Activated B cell treated with CpG ODN at 0.5 μM for 24 hours (primary cell): ENCODE measurements at regions of chr2 and their contacts with region 1.

Region 1: DNA sequence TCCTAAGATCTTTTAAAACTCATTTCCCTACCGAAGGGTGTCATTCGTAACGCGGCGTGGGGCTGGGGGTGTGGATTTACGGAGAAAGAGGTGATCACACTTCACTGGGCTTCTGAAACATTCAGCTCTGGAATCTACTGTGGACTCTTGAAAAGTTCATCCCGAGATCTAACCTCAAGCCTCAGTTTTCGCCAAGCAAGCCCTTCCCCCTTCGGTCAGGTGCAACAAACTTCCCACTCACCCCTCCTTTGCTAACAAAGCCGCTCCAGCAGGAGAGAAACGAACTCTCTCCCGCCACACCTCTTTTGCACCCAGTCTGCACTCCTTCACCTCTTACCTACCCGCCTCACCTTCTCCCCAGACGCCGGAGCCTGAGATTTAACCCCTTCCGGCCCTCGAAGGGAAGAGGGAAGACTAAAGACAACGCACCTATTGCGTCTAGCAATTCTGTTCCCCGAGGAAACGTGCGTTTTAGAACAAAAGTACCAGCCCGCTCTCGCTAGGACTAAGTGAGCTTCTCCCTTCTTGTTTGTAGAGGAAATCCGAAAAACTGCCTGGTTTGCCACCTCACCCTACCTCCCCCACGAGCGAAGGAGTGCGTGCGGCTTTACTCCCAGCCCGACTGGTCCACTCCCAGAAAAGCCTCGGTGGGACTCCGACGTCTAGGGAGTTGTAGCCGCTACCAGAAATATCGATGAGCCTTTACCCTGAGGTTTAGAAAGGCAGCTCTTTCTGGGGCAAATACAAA is 538 bp upstream of the PEX13 start:
- DNase-seq: peak; percentile 62
- ATAC-seq: peak; percentile 70
- H3K4me3 Mint-ChIP-seq: peak overlapping the region; percentile 99
- H3K27ac Mint-ChIP-seq: peak overlapping the region; percentile 98
- H3K4me1 Mint-ChIP-seq: peaks cover 33% of the 10 kb centered on the region
- H3K27me3 Mint-ChIP-seq: no peaks in the 10 kb centered on the region
- CTCF ChIP-seq: no peak

Region 2: DNA sequence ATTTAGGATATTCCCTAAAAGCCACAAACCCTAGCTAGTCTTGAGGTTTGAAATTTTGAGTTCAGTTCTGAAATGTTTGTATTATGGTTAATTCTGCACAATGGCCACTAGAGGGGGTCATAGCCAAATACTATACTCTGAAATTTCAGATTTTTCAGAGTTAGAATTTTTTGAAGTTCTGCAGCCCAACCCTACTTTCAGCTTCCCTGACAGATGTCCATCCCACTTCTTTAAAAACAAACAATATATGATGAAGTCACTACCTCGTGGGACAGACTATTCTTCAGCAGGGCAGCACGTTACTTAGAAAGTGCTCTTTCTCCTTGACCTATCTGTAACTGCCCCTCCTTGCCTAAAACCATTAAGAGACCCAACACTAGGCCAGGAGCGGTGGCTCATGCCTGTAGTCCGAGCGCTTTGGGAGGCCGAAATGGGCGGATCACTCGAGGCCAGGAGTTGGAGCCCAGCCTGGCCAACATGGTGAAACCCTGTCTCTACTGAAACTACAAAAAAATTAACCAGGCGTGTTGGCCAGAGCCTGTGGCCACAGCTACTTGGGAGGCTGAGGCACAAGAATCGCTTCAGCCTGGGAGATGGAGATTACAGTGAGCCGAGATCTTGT is 309.1 kb before region 1 on chr2:
- CTCF ChIA-PET with region 1: no interaction called
- POLR2A ChIA-PET with region 1: no interaction called
- intact Hi-C with region 1: no loop called
- DNase-seq: no peak
- ATAC-seq: peak; percentile 28
- H3K4me3 Mint-ChIP-seq: no peak overlapping the region
- H3K27ac Mint-ChIP-seq: no peak overlapping the region
- H3K4me1 Mint-ChIP-seq: no peaks in the 10 kb centered on the region
- H3K27me3 Mint-ChIP-seq: peaks cover 5% of the 10 kb centered on the region
- CTCF ChIP-seq: no peak

Region 3: GRCh38 chr2:61065715-61066709 is 49.0 kb after region 1 on chr2 and contains the start of gene SANBR:
- CTCF ChIA-PET with region 1: no interaction called
- POLR2A ChIA-PET with region 1: interaction called, 3 read pairs
- intact Hi-C with region 1: loop called (anchors 1 kb)
- DNase-seq: peak; percentile 85
- ATAC-seq: peak; percentile 98
- H3K4me3 Mint-ChIP-seq: peak within 1 kb of the TSS; percentile 96
- H3K27ac Mint-ChIP-seq: peak within 1 kb of the TSS; percentile 82
- H3K4me1 Mint-ChIP-seq: peaks cover 11% of the 10 kb centered on the region
- H3K27me3 Mint-ChIP-seq: no peaks in the 10 kb centered on the region
- CTCF ChIP-seq: no peak
- total RNA-seq, gene SANBR: 2.0 and 2.2 TPM in 2 replicates

Region 4: DNA sequence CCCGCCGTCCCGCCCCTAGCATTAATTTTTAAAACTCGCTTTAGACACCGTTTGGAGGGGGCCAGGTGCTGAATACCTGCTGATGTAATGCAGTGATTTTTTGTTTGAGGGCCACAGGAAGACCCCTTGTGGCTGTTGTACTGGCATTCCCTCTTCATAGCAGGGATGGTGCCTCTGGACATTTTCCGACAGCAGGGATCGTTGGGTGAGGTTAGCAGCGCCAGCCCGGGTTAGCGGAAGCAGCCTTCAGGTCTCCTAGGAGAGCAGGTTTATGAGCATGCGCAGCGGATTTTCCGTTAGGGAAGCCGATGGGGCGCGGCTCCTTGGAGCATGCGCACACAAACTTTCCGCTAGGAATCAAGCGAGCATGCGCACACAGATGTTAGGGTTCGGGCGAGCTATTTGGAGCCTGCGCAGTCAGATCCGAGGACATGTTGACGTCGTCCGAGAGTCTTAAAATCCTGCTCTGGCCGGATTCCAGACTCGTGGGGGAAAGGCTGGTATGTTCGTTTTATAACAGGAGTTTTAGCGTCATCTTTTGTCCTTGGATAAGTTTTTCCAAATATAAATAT is 127.8 kb after region 1 on chr2:
- CTCF ChIA-PET with region 1: no interaction called
- POLR2A ChIA-PET with region 1: interaction called, 5 read pairs
- intact Hi-C with region 1: loop called (anchors 1 kb)
- DNase-seq: peak; percentile 82
- ATAC-seq: peak; percentile 93
- H3K4me3 Mint-ChIP-seq: peak overlapping the region; percentile 97
- H3K27ac Mint-ChIP-seq: peak overlapping the region; percentile 97
- H3K4me1 Mint-ChIP-seq: peaks cover 9% of the 10 kb centered on the region
- H3K27me3 Mint-ChIP-seq: no peaks in the 10 kb centered on the region
- CTCF ChIP-seq: no peak

Region 5: GRCh38 chr2:61470965-61471904 is 454.3 kb after region 1 on chr2 and contains the start of gene USP34:
- CTCF ChIA-PET with region 1: no interaction called
- POLR2A ChIA-PET with region 1: no interaction called
- intact Hi-C with region 1: loop called (anchors 5 kb)
- DNase-seq: peak; percentile 79
- ATAC-seq: peak; percentile 82
- H3K4me3 Mint-ChIP-seq: peak within 1 kb of the TSS; percentile 95
- H3K27ac Mint-ChIP-seq: peak within 1 kb of the TSS; percentile 95
- H3K4me1 Mint-ChIP-seq: peaks cover 38% of the 10 kb centered on the region
- H3K27me3 Mint-ChIP-seq: no peaks in the 10 kb centered on the region
- CTCF ChIP-seq: no peak
- total RNA-seq, gene USP34: 142 and 176 TPM in 2 replicates